ENCODE measurements at regions of chr18 and their contacts with region 1.

Region 1: GRCh38 chr18:35324926-35325655 is 19.1 kb downstream of the ZNF24 start:
- H3K4me3 ChIP-seq: no peak overlapping the region
- H3K27ac ChIP-seq: no peak overlapping the region
- H3K4me1 ChIP-seq: no peaks in the 10 kb centered on the region
- CTCF ChIP-seq: no peak

Region 2: GRCh38 chr18:35296060-35296459 is 29.0 kb before region 1 on chr18:
- CTCF ChIA-PET with region 1: interaction called, 5 read pairs
- POLR2A ChIA-PET with region 1: interaction called, 11 read pairs
- H3K4me3 ChIP-seq: no peak overlapping the region
- H3K27ac ChIP-seq: no peak overlapping the region
- H3K4me1 ChIP-seq: no peaks in the 10 kb centered on the region
- CTCF ChIP-seq: no peak

Measured in HEK293 (cell line).